Adrenal gland (tissue), 19 donors: ENCODE measurements at regions of chr1 and their contacts with region 1.

Region 1: DNA sequence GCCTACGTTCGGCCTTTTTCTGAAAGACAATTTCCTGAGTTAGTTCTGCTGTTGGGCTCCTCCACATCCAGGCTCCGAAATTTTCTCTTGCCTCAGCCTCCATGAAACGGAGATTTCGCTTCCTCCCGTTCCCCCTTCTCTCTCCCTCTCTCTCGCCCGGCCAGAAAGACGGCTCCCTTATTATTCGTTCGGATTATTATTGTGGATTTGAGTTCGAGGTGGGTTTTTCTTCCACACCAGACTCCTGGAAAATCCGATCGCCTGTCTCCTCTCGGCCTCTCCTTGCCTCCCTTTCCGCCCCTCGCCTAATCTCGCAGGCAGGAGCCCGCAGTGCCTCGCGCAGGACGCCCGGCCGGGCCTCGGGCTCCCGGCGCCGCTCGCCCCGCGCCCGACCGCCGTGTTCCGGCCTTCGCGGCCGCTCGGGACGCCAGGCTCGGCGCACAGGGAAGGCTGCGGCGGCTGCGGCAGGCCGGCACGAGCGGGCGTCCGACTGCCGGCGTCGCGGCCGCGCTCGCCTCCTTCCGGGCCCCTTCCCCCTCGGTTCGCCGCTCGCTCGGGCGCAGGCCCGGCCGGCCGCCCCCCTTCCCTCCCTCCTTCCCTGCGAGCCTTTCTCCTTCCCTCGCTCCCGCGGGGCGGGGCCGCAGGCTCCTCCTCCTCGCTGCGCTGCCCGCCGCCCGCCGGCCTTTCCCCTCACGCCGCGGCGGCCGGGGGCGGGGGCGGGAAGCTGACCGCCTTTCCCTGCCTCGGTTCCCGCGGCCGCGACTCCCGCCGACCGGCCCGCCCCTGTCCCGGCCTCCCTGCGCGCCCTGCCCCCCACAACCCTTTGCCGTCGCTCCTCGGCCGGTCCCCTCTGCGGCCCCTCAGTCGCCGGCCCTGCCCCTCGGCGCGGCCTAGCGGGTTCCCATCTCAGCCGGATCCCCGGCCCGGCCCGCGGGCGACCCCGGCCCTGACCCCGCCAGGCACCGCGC is at the start of gene ARHGEF11:
- DNase-seq: peak; percentile 90 to 95 (median 93)
- H3K4me3 ChIP-seq: peak within 1 kb of the TSS in 3 of 4 donors; percentile 51 to 92 (median 64)
- H3K27ac ChIP-seq: peak within 1 kb of the TSS; percentile 52 to 97 (median 87)
- H3K4me1 ChIP-seq: peaks cover 34 to 46% of the 10 kb centered on the region in 2 donors
- H3K27me3 ChIP-seq: no peaks in the 10 kb centered on the region
- CTCF ChIP-seq: no peak
- POLR2A ChIP-seq: peak; percentile 78 to 86
- total RNA-seq, gene ARHGEF11: 19.3 to 69.2 (median 44.3) TPM

Region 2: DNA sequence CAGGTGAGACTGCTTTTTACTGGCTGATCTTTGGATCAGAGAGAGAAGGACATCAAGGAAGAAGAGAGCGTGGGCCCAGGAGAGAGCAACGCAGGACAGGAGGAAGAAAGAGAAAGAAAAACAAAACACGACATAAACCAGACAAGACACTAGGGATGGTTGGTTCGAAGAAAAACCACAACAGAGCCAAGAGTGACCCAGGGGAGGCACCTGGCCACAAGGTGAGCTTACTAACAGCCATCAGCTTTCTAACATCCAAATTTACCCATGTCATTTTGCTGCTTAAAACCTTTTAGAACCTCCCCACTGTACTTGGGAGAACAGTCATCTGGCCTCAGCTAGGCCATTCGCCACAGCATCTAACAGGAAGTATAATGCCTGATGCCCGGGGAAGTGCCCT is 57.8 kb before region 1 on chr1:
- intact Hi-C with region 1: loop called in 1 of 2 experiments (anchors 10 kb)
- DNase-seq: no peak
- H3K4me3 ChIP-seq: no peak overlapping the region
- H3K27ac ChIP-seq: no peak overlapping the region
- H3K4me1 ChIP-seq: no peaks in the 10 kb centered on the region
- H3K27me3 ChIP-seq: no peaks in the 10 kb centered on the region
- CTCF ChIP-seq: no peak
- POLR2A ChIP-seq: no peak

Region 3: GRCh38 chr1:157176591-157177121 is 131.1 kb after region 1 on chr1:
- intact Hi-C with region 1: no loop called
- DNase-seq: no peak
- H3K4me3 ChIP-seq: no peak overlapping the region
- H3K27ac ChIP-seq: no peak overlapping the region
- H3K4me1 ChIP-seq: no peaks in the 10 kb centered on the region
- H3K27me3 ChIP-seq: no peaks in the 10 kb centered on the region
- CTCF ChIP-seq: no peak
- POLR2A ChIP-seq: no peak